ENCODE measurements at regions of chr6 and their contacts with region 1.

Region 1: DNA sequence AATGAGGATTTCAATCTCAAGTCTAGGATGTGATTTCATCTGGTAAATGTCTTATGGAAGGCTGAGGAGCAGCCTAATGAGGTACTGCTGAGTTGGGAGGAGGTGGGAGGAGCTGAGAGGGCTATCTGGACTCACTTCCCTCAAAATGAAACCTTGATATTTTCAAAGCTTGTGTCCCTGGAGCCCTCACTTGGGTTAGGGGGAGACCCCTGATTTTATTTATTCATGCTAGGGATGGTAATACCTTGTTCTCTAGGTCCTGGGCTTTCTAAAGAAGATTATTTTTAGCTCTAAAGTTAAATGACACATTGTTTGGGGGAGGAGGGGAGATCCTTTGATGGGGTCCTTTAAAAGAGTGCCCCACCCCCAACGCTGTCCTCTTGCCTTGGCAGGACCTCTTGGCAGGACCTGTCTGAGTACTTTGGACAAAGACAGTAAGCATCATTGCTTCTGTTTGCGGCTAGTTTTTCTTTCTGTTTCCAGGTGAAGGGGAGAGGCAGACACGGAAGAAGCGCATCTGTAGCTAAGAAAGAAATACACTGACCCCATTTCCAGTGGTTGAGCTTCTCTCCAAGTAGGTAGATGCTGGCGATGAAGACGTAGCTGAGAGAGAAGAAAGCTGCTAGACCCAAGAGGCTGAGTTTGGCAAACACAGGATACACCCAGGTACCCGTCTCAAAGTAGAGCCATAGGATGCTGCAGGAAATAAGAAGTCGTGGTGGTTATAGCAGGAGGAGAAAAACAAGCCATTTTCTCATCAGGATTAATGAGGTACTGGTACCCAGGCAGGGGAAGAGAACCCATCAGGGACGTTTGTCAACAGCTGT is 55.6 kb downstream of the ADTRP start:
- DNase-seq: no peak
- H3K4me3 ChIP-seq: no peak overlapping the region
- H3K27ac ChIP-seq: no peak overlapping the region
- H3K4me1 ChIP-seq: no peaks in the 10 kb centered on the region
- H3K27me3 ChIP-seq: no peaks in the 10 kb centered on the region
- CTCF ChIP-seq: no peak

Region 2: DNA sequence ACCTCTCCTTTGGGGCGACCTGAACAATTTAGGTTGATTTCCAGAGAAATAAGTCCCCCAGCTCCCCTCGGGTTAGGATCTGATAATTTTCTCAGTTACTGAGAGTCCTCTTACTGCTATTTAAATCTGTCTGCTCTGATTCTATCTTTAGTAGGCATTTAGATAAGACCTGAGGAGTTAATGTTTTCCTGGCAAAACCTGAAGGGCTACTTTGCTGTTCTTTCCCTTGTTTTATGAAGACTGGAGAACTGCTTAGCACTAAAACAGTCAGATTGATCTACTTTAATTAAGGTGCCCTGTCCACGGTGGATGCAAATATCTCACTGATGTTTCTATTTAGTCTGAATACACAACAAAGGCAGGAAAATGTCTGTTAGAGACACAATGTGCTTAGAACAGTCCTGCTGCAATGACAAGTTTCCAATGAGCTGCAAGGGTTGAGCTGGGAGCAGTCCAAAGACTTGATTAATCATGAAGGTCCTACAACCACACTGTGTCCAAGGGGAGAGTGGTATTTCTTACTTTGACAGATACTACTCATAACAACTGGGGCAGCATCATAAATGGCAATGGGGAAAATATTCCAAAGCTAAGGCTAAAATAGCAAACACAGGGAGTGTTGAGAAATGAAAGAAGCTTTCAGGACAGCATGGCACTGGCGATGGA is 39.9 kb after region 1 on chr6:
- CTCF ChIA-PET with region 1: no interaction called
- dilution Hi-C with region 1: loop called (anchors 5 kb)
- in situ Hi-C with region 1: no loop called
- intact Hi-C with region 1: no loop called
- DNase-seq: no peak
- H3K4me3 ChIP-seq: no peak overlapping the region
- H3K27ac ChIP-seq: no peak overlapping the region
- H3K4me1 ChIP-seq: peaks cover 42% of the 10 kb centered on the region
- H3K27me3 ChIP-seq: no peaks in the 10 kb centered on the region
- CTCF ChIP-seq: no peak

Region 3: GRCh38 chr6:11947063-11947974 is 224.3 kb after region 1 on chr6:
- CTCF ChIA-PET with region 1: no interaction called
- dilution Hi-C with region 1: no loop called
- in situ Hi-C with region 1: no loop called
- intact Hi-C with region 1: no loop called
- DNase-seq: no peak
- H3K4me3 ChIP-seq: no peak overlapping the region
- H3K27ac ChIP-seq: no peak overlapping the region
- H3K4me1 ChIP-seq: no peaks in the 10 kb centered on the region
- H3K27me3 ChIP-seq: no peaks in the 10 kb centered on the region
- CTCF ChIP-seq: peak; percentile 17

Measured in mammary epithelial cell (primary cell).